ENCODE measurements at regions of chr22 and their contacts with region 1.

Region 1: GRCh38 chr22:36123673-36124630 is 36.6 kb downstream of the APOL3 start:
- DNase-seq: peak; percentile 80 to 97 (median 94)
- ATAC-seq: peak; percentile 99
- H3K4me3 ChIP-seq: peak overlapping the region; percentile 49 to 54
- H3K4me3 Mint-ChIP-seq: peak overlapping the region; percentile 89
- H3K27ac ChIP-seq: peak overlapping the region; percentile 41 to 71
- H3K27ac Mint-ChIP-seq: peak overlapping the region; percentile 98
- H3K4me1 ChIP-seq: peaks cover 9% of the 10 kb centered on the region
- H3K4me1 Mint-ChIP-seq: peaks cover 13% of the 10 kb centered on the region
- H3K27me3 ChIP-seq: no peaks in the 10 kb centered on the region
- H3K27me3 Mint-ChIP-seq: no peaks in the 10 kb centered on the region
- CTCF ChIP-seq: peak; percentile 95

Region 2: DNA sequence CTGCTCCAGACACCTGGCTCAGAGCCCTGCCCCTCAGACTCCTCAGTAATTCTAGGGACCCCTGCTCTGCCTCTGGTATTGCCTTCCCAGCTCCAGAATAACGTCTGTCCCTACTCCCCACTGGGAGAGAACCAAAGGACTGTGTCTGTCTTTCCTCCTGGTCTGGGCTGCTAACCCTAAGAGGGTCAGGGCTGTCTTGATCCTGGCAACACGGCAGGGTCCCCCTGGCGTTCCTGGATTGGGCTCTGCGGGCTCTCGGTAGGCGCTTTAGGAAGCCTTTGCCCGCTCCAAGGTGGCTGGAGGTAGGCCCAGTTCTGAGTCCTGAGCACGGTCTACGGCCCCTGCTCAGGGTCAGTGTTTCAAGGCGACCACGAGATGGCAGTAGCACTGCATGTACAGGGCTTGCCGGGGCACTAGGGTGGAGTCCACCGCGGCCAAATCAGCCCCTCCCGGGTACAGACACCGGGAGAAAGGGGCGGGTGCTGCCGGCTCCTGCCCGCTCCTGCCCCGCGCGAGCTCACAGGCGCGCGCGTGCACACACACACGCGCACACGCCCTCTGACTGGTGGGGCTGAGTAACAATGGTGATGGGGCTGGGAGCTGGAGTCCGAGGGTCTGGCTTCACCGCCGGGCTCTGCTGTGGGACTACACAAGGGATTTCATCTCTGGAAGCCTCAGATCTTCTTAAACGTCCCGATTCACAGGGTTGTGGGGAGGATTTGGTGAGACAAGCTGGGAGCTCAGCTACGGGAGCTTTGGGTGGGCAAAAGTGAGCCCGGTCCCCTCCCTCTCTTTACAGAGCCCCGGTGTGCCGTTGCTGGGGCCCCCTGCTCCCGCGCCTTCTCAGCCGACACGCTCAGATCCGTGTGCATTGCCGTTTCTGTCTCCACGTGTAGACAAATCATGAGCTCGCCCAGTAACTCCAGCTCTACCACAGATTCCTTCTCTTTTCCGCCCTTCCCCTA is 773.1 kb before region 1 on chr22:
- CTCF ChIA-PET with region 1: interaction called, 5 read pairs
- POLR2A ChIA-PET with region 1: interaction called, 7 read pairs
- intact Hi-C with region 1: loop called in 1 of 2 experiments (anchors 1 kb)
- DNase-seq: peak; percentile 67 to 92 (median 83)
- ATAC-seq: peak; percentile 85
- H3K4me3 ChIP-seq: peak overlapping the region; percentile 36 to 46
- H3K4me3 Mint-ChIP-seq: peak overlapping the region; percentile 79
- H3K27ac ChIP-seq: no peak overlapping the region
- H3K27ac Mint-ChIP-seq: no peak overlapping the region
- H3K4me1 ChIP-seq: peaks cover 14% of the 10 kb centered on the region
- H3K4me1 Mint-ChIP-seq: peaks cover 20% of the 10 kb centered on the region
- H3K27me3 ChIP-seq: peaks cover 0 to 5% of the 10 kb centered on the region in 2 experiments
- H3K27me3 Mint-ChIP-seq: peaks cover 11% of the 10 kb centered on the region
- CTCF ChIP-seq: peak; percentile 85

Region 3: DNA sequence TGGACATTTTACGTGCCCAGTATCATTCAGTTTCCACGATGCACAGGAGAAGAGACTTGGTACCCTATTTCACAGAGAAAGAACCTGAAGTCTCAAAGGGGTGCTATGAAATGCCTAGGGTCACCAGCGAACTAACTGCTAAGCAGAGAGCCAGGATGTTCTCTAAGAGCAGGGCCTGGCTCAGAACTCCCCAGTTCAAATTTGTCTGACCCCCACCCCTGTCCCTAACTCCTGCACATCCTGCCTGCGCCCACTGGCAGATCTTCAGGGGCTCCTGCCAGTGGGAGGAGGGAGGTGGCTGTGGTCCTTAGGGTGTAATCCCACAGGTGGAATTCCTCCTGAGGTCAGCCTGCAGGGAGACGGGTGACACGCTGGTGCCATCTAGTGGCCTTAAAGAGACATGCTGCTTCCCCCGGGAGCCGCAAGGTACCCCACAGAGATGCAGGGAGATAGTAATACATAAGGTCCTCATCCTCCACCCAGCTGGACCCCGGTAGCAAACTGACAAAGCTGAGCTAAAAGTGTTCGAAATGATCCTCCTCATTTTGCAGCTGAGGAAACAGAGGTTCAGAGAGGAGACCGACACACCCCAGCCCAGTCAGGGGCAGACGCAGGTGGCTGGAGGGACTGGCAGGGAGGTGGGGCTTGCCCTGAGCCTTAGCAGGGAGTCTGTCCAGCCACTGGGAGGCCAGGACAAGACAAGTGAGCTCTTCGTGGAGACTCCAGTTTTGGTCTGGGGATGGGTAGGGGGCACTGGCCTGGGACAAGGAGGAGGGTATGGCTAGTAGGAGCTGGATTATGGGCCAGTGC is 540.9 kb before region 1 on chr22:
- CTCF ChIA-PET with region 1: interaction called, 3 read pairs
- POLR2A ChIA-PET with region 1: no interaction called
- intact Hi-C with region 1: loop called in 1 of 2 experiments (anchors 1 kb)
- DNase-seq: peak; percentile 18 to 76 (median 53)
- ATAC-seq: peak; percentile 70
- H3K4me3 ChIP-seq: no peak overlapping the region
- H3K4me3 Mint-ChIP-seq: no peak overlapping the region
- H3K27ac ChIP-seq: no peak overlapping the region
- H3K27ac Mint-ChIP-seq: no peak overlapping the region
- H3K4me1 ChIP-seq: no peaks in the 10 kb centered on the region
- H3K4me1 Mint-ChIP-seq: no peaks in the 10 kb centered on the region
- H3K27me3 ChIP-seq: no peaks in the 10 kb centered on the region
- H3K27me3 Mint-ChIP-seq: no peaks in the 10 kb centered on the region
- CTCF ChIP-seq: peak; percentile 92

Region 4: DNA sequence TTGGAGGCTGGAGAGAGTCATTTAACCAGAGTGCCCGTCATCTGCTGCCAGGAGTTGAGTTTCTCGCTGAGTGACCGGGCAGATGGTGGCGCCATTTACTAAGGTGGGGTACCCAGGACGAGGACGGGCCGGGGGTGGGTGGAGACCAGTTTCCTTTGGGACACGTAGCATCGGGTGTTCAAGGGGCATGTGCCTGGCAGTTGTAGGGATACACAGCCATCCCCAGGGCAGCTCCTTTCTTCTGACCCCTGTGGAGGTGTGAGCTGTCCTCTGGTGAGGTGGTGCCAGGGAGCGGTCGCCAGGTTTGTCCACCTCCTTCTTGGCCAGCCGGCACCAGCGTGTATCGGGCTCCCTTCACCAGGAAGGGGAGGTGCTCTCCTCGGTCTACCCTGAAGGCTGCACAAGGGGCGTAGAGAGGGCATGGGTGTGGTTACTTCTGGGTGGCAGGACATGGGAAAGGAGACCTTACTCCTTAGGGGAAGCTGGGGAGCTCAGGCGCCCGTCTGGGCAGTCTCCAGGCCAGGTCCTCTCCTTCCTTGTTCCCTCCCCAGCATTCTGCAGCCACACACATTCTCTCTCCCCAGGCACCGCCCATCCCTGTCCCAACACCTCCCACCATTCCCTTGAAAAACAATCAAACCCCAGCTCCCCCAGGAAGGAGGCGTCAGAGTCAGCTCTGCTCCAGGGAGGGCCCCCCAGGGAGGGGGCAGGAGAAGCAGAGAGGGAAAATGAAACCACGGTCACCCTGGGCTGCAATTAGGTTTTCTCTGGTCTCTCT is 496.5 kb before region 1 on chr22:
- CTCF ChIA-PET with region 1: interaction called, 9 read pairs
- POLR2A ChIA-PET with region 1: no interaction called
- intact Hi-C with region 1: loop called (anchors 1 to 2 kb)
- DNase-seq: peak in 8 of 9 experiments; percentile 29 to 74 (median 54)
- ATAC-seq: peak; percentile 57
- H3K4me3 ChIP-seq: peak overlapping the region; percentile 45 to 60
- H3K4me3 Mint-ChIP-seq: peak overlapping the region; percentile 69
- H3K27ac ChIP-seq: no peak overlapping the region
- H3K27ac Mint-ChIP-seq: no peak overlapping the region
- H3K4me1 ChIP-seq: peaks cover 7% of the 10 kb centered on the region
- H3K4me1 Mint-ChIP-seq: peaks cover 19% of the 10 kb centered on the region
- H3K27me3 ChIP-seq: no peaks in the 10 kb centered on the region
- H3K27me3 Mint-ChIP-seq: peaks cover 7% of the 10 kb centered on the region
- CTCF ChIP-seq: no peak

Region 5: DNA sequence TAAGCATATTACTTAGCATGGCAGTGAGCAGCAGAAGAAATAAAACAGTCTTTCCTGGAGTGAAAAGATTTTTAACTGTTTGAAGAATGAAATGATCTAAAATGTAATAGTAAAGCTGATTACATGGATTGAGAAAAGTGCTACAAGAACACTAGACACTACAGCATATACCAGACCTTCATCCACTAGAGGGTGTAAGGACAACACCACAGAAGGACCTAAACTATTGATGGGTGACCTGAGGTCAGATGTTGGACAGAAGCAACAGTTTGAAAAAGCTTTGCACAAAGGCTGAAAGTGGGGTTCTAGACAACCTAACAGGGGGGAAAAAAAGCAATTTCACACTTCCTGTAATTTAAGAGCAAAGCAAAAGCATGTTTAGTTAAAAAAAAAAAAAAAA is 193.0 kb before region 1 on chr22:
- CTCF ChIA-PET with region 1: interaction called, 4 read pairs
- POLR2A ChIA-PET with region 1: no interaction called
- intact Hi-C with region 1: loop called in 1 of 2 experiments (anchors 10 kb)
- DNase-seq: peak in 2 of 9 experiments; percentile 6 to 23
- ATAC-seq: no peak
- H3K4me3 ChIP-seq: no peak overlapping the region
- H3K4me3 Mint-ChIP-seq: no peak overlapping the region
- H3K27ac ChIP-seq: no peak overlapping the region
- H3K27ac Mint-ChIP-seq: no peak overlapping the region
- H3K4me1 ChIP-seq: no peaks in the 10 kb centered on the region
- H3K4me1 Mint-ChIP-seq: no peaks in the 10 kb centered on the region
- H3K27me3 ChIP-seq: peaks cover 0 to 2% of the 10 kb centered on the region in 2 experiments
- H3K27me3 Mint-ChIP-seq: no peaks in the 10 kb centered on the region
- CTCF ChIP-seq: no peak

Region 6: GRCh38 chr22:36136475-36136874 is 12.5 kb after region 1 on chr22:
- CTCF ChIA-PET with region 1: interaction called, 23 read pairs
- POLR2A ChIA-PET with region 1: interaction called, 3 read pairs
- intact Hi-C with region 1: no loop called
- DNase-seq: no peak
- ATAC-seq: no peak
- H3K4me3 ChIP-seq: no peak overlapping the region
- H3K4me3 Mint-ChIP-seq: no peak overlapping the region
- H3K27ac ChIP-seq: no peak overlapping the region
- H3K27ac Mint-ChIP-seq: peak overlapping the region; percentile 55
- H3K4me1 ChIP-seq: peaks cover 13% of the 10 kb centered on the region
- H3K4me1 Mint-ChIP-seq: peaks cover 26% of the 10 kb centered on the region
- H3K27me3 ChIP-seq: no peaks in the 10 kb centered on the region
- H3K27me3 Mint-ChIP-seq: no peaks in the 10 kb centered on the region
- CTCF ChIP-seq: no peak